ENCODE measurements at regions of chr7 and their contacts with region 1.

Region 1: DNA sequence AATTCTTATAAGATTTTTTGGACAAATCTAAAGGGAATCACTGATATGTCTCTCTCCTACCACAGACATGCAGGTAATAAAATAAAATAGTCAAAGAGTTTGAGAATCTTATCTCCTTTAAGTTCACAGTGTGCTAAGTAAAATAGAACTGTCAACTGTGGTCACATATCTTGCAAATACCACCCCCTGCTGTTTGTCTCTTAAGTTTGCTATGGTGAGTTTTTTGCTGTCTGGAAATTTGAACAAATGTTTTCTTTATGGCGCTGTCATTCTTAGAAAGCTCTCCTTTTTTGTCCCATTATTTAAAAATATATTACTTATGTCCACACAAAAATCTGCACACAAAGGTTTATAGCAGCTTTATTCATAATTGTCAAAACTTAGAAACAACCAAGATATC is 19.6 kb downstream of the GIMAP5 start:
- DNase-seq: no peak
- ATAC-seq: peak; percentile 41
- H3K4me3 ChIP-seq: no peak overlapping the region
- H3K27ac ChIP-seq: no peak overlapping the region
- H3K4me1 ChIP-seq: peaks cover 0 to 36% of the 10 kb centered on the region in 2 donors
- H3K27me3 ChIP-seq: no peaks in the 10 kb centered on the region
- CTCF ChIP-seq: peak; percentile 24 to 27

Region 2: DNA sequence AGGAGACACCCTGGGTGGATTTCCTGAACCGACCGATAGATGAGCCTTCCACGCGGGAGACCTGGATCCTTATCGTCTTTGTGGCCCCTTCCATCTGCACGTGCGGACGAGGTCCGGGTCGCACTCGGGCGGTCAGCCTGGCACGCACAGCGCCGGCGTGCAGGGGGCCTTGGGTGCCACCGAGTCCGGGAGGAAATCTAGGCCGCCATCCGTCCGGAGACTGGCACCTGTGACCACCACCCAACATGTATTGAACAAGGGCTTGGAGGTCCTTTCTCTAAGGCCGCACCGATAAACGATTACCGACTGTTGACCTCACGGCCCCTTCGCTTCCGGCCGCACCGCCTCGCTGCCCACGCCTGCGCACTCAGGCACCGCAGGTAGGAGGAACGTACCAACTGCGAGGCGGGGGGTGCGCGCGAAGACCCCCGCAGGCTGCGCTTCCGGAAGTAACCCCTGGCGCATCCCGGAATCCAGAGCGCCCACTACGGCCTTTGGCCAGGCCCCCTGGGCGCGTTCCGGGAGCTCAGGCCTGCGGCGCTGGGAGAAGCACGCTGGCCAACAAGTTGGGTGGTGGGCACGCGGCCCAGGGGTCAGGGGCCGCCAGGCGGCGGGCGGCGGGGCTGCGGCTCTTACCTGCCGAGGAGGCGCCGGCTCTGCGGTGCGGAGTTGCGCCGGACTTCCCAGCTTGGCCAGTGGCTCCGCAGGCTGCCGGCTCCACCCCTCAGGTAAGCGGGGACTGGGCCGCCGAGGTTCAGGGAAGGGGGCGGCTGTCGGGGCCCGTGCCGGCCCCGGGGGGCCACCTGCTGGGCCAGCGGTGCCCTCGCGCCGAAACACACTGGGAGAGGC is 433.8 kb before region 1 on chr7 and contains the starts of genes ACTR3C and LRRC61:
- intact Hi-C with region 1: no loop called
- DNase-seq: peak; percentile 62 to 92 (median 72)
- ATAC-seq: peak; percentile 86
- H3K4me3 ChIP-seq: peak within 1 kb of the TSS; percentile 50 to 57
- H3K27ac ChIP-seq: peak within 1 kb of the TSS; percentile 94 to 95
- H3K4me1 ChIP-seq: peaks cover 27 to 43% of the 10 kb centered on the region in 2 donors
- H3K27me3 ChIP-seq: peaks cover 0 to 14% of the 10 kb centered on the region in 2 donors
- CTCF ChIP-seq: peak in 1 of 2 donors; percentile 33
- polyA plus RNA-seq, gene ACTR3C: 3.4 to 8.2 (median 4.4) TPM
- polyA plus RNA-seq, gene LRRC61: 16.2 to 22.5 (median 20.1) TPM

Region 3: DNA sequence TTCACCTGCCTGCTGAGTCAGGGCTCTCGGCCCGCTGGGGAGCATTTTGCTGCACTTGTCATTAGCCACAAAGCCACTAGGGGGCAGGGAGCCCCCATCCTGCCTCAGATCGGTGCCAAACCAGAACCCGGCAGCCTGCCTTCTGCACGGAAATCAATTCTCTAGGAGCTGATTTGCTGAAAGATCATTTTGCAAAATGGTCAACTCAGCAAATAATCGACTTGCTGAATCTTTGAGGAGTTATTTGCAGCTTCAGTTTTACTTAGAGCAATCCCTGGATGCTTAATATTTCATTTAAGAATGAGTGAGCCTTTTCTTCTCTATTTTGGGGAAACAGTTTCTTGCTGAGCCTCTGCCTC is 308.1 kb before region 1 on chr7:
- intact Hi-C with region 1: loop called in 1 of 2 experiments (anchors 5 kb)
- DNase-seq: peak; percentile 57 to 93 (median 79)
- ATAC-seq: peak; percentile 80
- H3K4me3 ChIP-seq: no peak overlapping the region
- H3K27ac ChIP-seq: peak overlapping the region; percentile 11 to 95
- H3K4me1 ChIP-seq: peaks cover 10 to 44% of the 10 kb centered on the region in 2 donors
- H3K27me3 ChIP-seq: no peaks in the 10 kb centered on the region
- CTCF ChIP-seq: peak; percentile 91 to 95

Measured in left lung (tissue), 14 donors.